GM13976 (cell line): ENCODE measurements at regions of chr7 and their contacts with region 1.

Region 1: DNA sequence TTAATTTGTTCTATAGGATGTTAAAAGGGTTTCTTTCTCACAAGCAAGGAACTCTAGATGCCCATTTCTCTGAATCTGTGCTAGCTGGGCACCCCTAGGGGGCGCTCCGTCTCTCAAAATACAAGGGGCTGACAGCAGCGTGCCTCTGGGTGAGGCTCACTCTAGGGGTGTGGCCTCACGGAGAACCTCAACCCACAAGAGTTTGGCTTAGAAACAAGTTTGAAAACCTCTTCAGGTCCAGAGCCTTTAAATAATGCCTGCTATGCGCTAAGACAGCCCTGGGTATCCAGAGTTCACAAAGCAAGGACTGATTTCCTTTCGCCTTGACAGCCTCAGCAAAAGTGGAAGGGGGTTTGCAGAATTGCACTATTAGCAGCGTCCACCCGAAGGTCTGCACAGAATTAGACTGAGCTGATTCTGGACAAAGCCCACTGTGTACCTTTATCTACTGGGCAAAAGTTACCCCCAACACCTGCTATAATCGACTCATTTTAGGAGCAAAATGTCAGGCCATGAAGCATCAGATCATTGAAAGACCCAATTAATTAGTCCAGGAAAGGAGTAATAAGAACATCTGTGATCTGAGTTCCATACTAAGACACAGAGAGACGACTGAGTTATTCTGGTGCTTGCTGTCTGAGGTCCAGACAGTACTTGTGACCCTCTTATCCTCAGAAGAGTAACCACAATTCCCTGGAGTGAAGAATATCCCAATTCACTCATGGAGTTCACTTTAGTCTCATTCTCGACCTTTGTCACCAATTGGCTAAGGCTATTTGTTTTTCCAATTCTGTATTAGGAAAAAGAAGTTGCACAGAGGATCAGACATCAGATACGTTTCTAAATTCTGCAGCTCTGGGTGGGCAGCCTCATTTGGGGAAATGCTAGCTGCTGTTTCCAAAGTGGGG is 574 bp upstream of the CPED1 start:
- DNase-seq: peak; percentile 79
- CTCF ChIP-seq: peak; percentile 91

Region 2: GRCh38 chr7:121081327-121081936 is 93.5 kb after region 1 on chr7:
- in situ Hi-C with region 1: loop called (anchors 25 kb)
- DNase-seq: peak; percentile 13
- CTCF ChIP-seq: peak; percentile 34

Region 3: GRCh38 chr7:121329191-121330052 is 341.5 kb after region 1 on chr7:
- in situ Hi-C with region 1: loop called (anchors 25 kb)
- DNase-seq: peak; percentile 68
- CTCF ChIP-seq: peak; percentile 14